ENCODE measurements at regions of chr11 and their contacts with region 1.

Region 1: DNA sequence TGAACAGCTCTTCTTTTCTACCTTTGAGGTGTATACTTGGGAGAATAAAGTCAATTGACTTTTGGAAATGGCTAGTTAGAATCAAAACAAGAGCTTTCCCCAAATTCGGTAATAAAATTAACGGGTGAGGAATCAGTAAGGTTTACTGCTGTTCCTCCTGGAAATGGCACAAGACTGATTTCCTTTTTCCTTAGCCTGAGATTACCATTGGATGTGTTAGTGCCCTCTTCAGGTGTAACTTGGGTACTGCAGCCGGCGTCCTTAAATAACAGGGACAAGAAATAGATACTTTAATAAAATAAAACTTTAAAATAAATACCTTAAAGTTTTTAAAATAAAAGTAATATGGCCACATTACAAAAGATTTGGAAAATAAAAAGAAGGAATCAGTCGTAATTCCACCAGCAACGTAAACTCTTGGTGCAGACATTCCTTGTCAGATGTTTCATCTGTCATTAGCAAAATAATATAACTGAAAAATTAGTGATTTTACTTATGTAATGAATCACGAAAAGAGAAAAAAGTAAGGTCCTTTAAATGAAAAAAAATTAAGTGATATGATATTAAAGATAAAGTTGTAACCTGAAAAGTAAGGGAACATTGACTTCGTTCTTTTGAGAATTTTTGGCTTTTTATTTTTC is 29.7 kb downstream of the ZFTA start:
- DNase-seq: peak; percentile 77
- H3K4me3 Mint-ChIP-seq: no peak overlapping the region
- H3K27ac Mint-ChIP-seq: no peak overlapping the region
- H3K4me1 Mint-ChIP-seq: peaks cover 2% of the 10 kb centered on the region
- H3K27me3 Mint-ChIP-seq: no peaks in the 10 kb centered on the region

Region 2: GRCh38 chr11:63635762-63636465 is 102.9 kb before region 1 on chr11:
- CTCF ChIA-PET with region 1: interaction called, 19 read pairs
- DNase-seq: peak; percentile 77
- H3K4me3 Mint-ChIP-seq: no peak overlapping the region
- H3K27ac Mint-ChIP-seq: no peak overlapping the region
- H3K4me1 Mint-ChIP-seq: peaks cover 15% of the 10 kb centered on the region
- H3K27me3 Mint-ChIP-seq: no peaks in the 10 kb centered on the region